ENCODE measurements at regions of chr7 and their contacts with region 1.

Region 1: DNA sequence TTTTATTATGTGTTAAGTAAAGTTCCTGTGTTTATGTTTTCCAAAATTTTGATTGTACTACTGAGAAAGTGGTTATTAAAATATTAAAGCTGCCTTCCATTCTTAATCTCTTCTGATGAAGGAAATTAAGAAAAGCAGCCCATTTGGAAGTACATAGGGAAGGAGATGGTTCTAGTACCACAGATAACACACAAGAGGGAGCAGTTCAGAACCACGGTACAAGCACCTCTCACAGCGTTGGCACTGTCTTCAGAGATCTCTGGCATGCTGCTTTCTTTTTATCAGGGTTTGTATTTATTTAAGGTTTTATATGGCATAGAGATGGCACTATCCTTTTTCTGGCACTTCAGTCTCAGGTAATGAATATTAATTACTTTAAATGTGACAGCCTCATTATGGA is 111.6 kb downstream of the PHTF2 start:
- DNase-seq: peak; percentile 41
- H3K4me3 ChIP-seq: no peak overlapping the region
- H3K27ac ChIP-seq: peak overlapping the region; percentile 97
- H3K4me1 ChIP-seq: peaks cover 91% of the 10 kb centered on the region
- CTCF ChIP-seq: peak; percentile 68

Region 2: DNA sequence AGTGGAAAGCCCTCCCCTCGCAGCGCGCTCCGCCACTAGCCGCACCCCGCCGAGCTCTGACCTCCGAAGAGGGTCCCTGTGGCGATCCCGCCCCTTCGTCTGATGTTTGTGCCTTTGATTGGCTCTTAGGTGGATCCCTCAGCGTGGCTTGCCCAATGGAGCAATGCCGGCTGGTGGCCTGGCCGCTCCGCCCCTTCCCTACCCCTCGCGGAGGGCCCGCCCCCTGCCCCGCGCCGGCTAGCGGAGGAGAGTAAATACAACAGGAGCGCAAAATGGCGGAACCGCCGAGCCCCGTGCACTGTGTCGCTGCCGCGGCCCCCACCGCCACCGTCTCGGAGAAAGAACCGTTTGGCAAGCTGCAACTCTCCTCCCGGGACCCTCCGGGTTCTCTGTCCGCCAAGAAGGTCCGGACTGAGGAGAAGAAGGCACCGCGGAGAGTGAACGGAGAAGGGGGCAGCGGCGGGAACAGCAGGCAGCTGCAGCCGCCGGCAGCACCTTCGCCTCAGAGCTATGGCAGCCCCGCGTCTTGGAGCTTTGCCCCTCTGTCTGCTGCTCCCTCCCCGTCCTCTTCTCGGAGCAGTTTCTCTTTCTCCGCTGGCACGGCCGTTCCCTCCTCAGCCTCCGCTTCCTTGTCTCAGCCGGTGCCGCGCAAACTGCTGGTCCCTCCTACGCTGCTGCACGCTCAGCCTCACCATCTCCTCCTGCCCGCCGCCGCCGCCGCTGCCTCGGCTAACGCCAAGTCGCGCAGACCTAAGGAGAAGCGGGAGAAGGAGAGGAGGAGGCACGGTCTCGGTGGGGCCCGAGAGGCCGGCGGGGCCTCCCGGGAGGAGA is 213.7 kb before region 1 on chr7 and contains the start of gene RSBN1L:
- CTCF ChIA-PET with region 1: no interaction called
- POLR2A ChIA-PET with region 1: no interaction called
- intact Hi-C with region 1: loop called (anchors 2 kb)
- DNase-seq: peak; percentile 98
- H3K4me3 ChIP-seq: peak within 1 kb of the TSS; percentile 99
- H3K27ac ChIP-seq: peak within 1 kb of the TSS; percentile 85
- H3K4me1 ChIP-seq: peaks cover 29% of the 10 kb centered on the region
- CTCF ChIP-seq: 0 out of 2 replicates have a peak, but pooled peaks have one; percentile 31
- total RNA-seq, gene RSBN1L: 23.3 and 27.4 TPM in 2 replicates

Region 3: DNA sequence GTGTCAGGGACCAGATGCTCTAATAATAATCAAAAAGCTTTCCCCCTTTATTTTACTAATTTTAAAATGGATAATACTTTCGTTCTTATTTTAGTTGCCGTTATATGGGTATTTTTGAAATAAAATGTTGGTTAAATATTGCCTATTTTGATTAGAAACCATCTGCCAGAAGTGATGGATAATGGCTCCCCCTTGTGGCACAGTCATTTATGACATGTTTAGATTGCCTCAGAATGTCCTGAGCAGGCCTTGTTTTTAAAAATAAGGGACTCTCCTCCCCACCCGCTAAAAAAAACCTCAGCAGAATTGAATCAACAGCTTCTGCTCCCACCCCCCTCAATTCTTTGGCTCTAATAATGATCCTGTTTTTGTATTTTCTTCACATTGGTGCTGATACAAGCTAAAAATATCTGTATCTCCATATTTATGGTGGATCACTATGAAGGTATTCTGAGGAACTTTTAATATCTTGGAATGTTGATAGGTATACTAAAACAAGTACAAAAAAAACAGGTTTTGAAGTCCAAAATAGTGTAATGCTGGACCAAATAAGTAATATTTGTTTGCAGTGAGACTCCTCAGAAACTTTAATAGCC is 150.7 kb before region 1 on chr7:
- CTCF ChIA-PET with region 1: no interaction called
- POLR2A ChIA-PET with region 1: interaction called, 3 read pairs
- intact Hi-C with region 1: loop called (anchors 2 kb)
- DNase-seq: peak; percentile 76
- H3K4me3 ChIP-seq: no peak overlapping the region
- H3K27ac ChIP-seq: peak overlapping the region; percentile 75
- H3K4me1 ChIP-seq: peaks cover 64% of the 10 kb centered on the region
- CTCF ChIP-seq: peak; percentile 98

Region 4: DNA sequence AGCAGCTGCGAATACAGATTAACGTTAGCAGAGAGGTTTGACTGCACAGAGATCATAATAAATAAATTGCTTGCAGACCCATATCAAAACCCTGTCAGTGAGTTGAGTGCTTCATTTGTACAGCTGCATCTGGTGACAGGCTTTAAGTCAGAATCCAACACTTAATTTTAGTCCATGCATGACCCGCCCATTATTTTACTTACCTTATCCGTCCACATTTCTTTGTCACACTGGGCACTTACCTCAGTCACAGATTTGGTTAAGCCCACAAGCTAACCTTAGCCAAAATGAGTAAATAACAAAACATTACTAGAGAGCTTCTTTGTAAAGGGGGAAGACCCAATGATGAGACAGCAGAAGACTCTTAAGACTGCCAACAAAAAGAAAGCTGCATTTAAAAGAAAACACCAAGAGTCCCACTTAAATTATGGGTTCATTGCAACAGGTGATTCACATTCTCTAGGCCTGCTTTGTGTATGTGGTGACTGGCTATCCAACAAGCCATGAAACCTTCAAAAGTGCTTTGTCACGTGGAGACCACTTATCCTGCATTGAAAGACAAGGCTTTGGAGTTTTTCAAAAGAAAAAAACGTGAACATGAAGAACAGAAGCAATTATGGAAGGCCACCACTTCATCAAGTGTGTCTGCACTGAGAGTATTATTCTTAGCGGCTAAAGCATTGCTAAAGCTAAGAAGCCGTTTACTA is 79.3 kb before region 1 on chr7:
- CTCF ChIA-PET with region 1: interaction called, 3 read pairs
- POLR2A ChIA-PET with region 1: interaction called, 10 read pairs
- intact Hi-C with region 1: no loop called
- DNase-seq: no peak
- H3K4me3 ChIP-seq: no peak overlapping the region
- H3K27ac ChIP-seq: peak overlapping the region; percentile 15
- H3K4me1 ChIP-seq: peaks cover 78% of the 10 kb centered on the region
- CTCF ChIP-seq: no peak

Region 5: DNA sequence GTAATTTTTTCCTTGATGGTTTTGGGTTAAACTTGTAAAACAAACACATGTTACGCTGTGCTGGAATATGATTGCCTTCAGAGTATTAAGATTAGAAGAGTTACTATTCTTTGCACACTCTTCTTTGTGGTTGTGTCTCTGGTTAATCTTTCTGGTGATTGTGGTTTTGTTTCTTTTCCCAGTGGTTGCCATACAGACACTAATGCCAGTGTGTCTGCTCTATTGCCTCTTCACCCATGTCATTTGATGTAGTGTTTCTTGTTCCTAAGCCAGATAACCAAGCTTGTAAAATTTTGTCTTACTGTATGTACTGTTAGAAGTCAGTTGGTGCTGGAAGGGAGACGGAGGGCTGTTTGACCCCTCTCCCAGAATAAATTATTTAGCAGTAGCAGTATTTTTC is 13.3 kb after region 1 on chr7:
- CTCF ChIA-PET with region 1: interaction called, 5 read pairs
- POLR2A ChIA-PET with region 1: interaction called, 106 read pairs
- intact Hi-C with region 1: no loop called
- DNase-seq: no peak
- H3K4me3 ChIP-seq: no peak overlapping the region
- H3K27ac ChIP-seq: peak overlapping the region; percentile 42
- H3K4me1 ChIP-seq: peaks cover 43% of the 10 kb centered on the region
- CTCF ChIP-seq: no peak

Region 6: GRCh38 chr7:77933394-77933793 is 23.3 kb after region 1 on chr7:
- CTCF ChIA-PET with region 1: no interaction called
- POLR2A ChIA-PET with region 1: interaction called, 14 read pairs
- intact Hi-C with region 1: loop called (anchors 2 kb)
- DNase-seq: no peak
- H3K4me3 ChIP-seq: no peak overlapping the region
- H3K27ac ChIP-seq: no peak overlapping the region
- H3K4me1 ChIP-seq: peaks cover 42% of the 10 kb centered on the region
- CTCF ChIP-seq: no peak

Region 7: DNA sequence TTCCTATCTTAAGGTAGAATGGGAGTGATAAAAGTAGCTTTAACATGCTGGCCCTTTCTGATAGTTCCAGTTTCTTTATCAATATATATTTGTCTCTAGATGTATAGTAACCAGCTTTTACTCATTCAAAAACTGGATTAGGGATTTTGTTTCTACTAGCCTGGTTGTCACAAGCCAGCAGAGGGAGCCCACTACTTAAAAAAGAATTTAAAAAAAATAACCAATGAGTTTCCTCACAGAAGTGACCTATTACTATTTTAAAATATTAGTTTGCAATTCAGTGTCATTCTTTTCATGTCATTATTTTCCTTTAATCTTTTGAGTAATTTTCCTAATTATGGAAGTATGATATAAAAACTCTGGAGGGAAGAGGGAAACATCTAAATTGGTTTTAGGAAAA is 30.5 kb after region 1 on chr7:
- CTCF ChIA-PET with region 1: no interaction called
- POLR2A ChIA-PET with region 1: interaction called, 3 read pairs
- intact Hi-C with region 1: loop called (anchors 2 kb)
- DNase-seq: peak; percentile 38
- H3K4me3 ChIP-seq: no peak overlapping the region
- H3K27ac ChIP-seq: no peak overlapping the region
- H3K4me1 ChIP-seq: peaks cover 29% of the 10 kb centered on the region
- CTCF ChIP-seq: peak; percentile 96

Region 8: GRCh38 chr7:78260826-78261225 is 350.7 kb after region 1 on chr7:
- CTCF ChIA-PET with region 1: no interaction called
- POLR2A ChIA-PET with region 1: no interaction called
- intact Hi-C with region 1: no loop called
- DNase-seq: no peak
- H3K4me3 ChIP-seq: no peak overlapping the region
- H3K27ac ChIP-seq: no peak overlapping the region
- H3K4me1 ChIP-seq: peaks cover 81% of the 10 kb centered on the region
- CTCF ChIP-seq: no peak